Right ventricle myocardium superior (tissue), 1 donor: ENCODE measurements at regions of chr11 and their contacts with region 1.

Region 1: GRCh38 chr11:119375337-119376196 is 5.9 kb downstream of the USP2 start:
- DNase-seq: peak; percentile 90
- ATAC-seq: peak; percentile 62

Region 2: DNA sequence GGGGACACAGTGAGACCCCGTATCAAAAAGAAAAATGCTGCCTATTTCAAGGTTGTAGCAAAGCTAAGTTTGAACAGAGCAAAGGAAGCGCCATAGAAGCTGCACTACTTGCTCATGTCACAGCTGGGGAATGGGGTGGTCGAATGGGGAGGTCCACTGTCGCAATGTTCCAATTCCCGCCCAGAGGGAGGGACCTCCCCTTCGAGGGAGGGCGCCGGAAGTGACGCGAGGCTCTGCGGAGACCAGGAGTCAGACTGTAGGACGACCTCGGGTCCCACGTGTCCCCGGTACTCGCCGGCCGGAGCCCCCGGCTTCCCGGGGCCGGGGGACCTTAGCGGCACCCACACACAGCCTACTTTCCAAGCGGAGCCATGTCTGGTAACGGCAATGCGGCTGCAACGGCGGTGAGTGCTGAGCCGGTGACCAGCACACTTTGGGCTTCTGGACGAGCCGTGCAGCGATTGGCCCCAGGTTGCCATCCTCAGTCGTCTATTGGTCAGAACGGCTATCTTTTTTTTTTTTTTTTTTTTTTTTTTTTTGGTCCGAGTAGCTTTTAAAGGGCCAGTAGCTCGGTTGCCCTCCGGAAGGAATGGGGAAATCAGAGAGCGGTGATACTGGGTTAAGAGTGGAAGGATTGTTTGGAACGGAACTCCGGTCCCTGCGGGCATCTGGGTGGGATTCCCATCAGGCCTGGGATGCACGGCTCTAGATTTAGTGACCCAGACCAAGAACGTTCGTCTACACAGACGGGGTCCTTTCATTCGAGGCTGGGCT is 290.7 kb before region 1 on chr11 and contains the start of gene HMBS:
- intact Hi-C with region 1: no loop called
- DNase-seq: peak; percentile 96
- ATAC-seq: peak; percentile 98
- total RNA-seq, gene HMBS: 22.1 TPM

Region 3: DNA sequence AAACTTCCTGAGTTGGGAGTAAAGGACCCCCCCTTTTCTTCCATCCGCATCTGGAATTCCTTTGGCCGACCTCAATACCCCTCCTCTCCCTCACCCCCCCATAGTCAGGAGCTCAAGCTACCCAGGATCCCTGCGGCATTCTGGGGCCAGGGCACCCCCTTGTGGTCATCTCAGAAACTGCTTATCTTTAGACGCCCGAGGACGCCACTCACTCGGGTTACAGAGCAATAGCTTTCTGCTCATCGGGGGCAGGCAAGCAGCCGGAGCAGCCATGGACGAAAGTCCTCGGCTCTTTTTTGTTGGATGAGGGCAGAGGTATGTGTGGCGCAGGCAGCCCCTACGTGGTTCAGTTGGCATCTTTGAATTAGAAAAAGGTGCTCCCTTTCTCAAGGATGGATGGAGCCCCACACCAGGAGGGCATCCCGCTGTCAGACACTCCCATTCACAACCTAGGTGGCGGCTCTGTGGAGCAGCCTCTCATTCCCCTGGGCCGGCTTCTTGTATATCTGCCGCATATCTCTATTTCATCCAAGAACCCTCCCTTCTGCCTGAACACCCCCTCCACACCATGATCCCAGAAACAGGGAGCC is 37.2 kb before region 1 on chr11:
- intact Hi-C with region 1: loop called (anchors 5 kb)
- DNase-seq: no peak
- ATAC-seq: peak; percentile 15

Region 4: DNA sequence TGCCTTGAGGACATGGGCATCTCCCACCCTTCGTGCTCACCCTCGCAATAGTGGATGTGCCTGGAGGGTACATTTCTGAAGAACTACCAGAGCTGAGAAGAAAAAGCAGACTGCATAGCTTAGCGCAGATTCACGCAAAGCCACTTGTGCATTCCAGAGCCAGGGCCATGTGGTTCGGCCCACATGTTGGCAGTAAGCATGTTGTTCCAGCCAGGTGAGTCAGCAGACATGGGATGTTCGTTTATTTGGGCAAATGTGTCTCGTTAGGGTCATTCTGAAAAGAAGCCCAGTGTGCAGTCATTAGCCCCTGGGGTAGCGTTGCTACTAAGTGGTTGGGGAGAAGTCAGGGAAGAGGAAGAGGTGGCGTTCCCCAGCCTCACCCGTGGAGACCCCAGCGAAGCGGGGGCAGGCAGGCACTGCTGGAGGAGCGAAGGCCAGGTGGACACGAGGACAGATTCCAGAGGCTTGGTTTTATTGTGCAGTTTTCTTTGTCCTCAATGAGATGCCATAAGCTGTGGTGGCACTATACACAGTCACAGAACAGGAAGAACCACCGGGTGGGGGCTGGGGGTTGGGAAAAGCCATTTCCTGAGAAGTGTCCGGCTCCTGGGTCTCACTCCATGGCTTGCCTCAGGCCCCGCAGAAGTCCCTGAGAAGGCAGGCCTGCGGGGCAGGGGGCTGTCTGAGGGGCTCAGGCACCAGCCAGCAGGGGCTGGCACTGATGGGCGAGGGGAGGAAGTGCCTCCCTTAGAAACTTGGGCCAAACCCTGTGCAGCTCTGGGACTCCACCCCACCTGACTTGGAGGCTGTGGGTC is 42.4 kb after region 1 on chr11:
- intact Hi-C with region 1: no loop called
- DNase-seq: no peak
- ATAC-seq: no peak